ENCODE measurements at regions of chr18 and their contacts with region 1.

Region 1: GRCh38 chr18:22057908-22058527 is 111.4 kb upstream of the GATA6 start:
- DNase-seq: no peak
- H3K4me3 ChIP-seq: no peak overlapping the region
- H3K27ac ChIP-seq: no peak overlapping the region
- H3K4me1 ChIP-seq: peaks cover 13% of the 10 kb centered on the region
- H3K27me3 ChIP-seq: no peaks in the 10 kb centered on the region
- CTCF ChIP-seq: no peak

Region 2: DNA sequence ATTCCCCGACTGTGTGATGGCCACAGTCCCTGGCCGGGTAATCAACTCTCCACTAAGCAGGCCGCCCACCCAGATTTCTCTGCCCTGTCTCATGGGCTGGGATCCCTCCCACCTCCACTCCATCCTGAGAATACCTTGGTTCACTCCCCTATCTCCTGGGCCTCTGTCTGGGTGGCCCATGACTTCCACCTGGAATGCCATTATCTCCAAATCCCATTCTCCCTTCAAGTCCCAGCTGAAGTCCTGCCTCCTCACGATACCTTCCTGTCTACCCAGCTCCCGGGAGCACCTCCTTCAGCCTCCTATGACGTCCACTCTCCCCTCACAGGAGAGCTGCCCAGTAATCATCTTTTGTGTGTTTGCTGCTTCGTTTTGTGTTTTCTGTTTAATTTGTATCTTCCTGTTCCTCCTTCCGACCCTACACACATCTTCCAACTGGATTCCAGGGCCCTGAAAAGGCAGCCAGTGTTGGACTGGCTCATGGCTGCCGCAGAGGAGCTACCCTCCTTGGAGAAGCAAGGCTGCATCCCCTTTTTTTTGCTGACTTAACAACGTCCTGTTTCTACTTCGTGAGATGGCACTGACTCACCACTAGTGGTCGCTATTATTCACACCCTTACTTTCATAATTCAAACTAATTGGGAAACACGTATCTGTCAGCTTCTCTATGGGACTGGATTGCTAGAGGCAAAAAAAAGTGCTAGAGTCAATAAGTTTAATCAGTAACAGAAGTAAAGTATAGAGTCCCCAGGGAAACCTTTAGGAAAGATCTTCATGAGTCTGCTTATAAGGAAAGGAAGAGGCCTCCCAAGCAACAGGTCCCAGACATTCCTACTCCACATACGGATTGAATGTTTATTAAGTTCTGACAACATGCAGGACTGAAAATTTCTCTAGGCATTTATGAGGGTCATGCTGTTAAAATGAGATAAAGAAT is 60.5 kb before region 1 on chr18:
- CTCF ChIA-PET with region 1: interaction called, 12 read pairs
- POLR2A ChIA-PET with region 1: no interaction called
- intact Hi-C with region 1: no loop called
- DNase-seq: peak; percentile 71
- H3K4me3 ChIP-seq: no peak overlapping the region
- H3K27ac ChIP-seq: no peak overlapping the region
- H3K4me1 ChIP-seq: peaks cover 4% of the 10 kb centered on the region
- H3K27me3 ChIP-seq: no peaks in the 10 kb centered on the region
- CTCF ChIP-seq: peak; percentile 93

Measured in A673 (cell line).